ENCODE measurements at regions of chr13 and their contacts with region 1.

Region 1: GRCh38 chr13:24270639-24271141 is 38.7 kb upstream of the C1QTNF9 start:
- DNase-seq: no peak
- ATAC-seq: peak; percentile 55
- H3K4me3 Mint-ChIP-seq: peak overlapping the region; percentile 87
- H3K27ac Mint-ChIP-seq: peak overlapping the region; percentile 95
- H3K4me1 Mint-ChIP-seq: peaks cover 76% of the 10 kb centered on the region
- H3K27me3 Mint-ChIP-seq: no peaks in the 10 kb centered on the region
- CTCF ChIP-seq: no peak

Region 2: GRCh38 chr13:23810685-23811240 is 459.9 kb before region 1 on chr13:
- CTCF ChIA-PET with region 1: no interaction called
- POLR2A ChIA-PET with region 1: no interaction called
- intact Hi-C with region 1: loop called (anchors 5 kb)
- DNase-seq: no peak
- ATAC-seq: peak; percentile 68
- H3K4me3 Mint-ChIP-seq: peak overlapping the region; percentile 20
- H3K27ac Mint-ChIP-seq: no peak overlapping the region
- H3K4me1 Mint-ChIP-seq: peaks cover 53% of the 10 kb centered on the region
- H3K27me3 Mint-ChIP-seq: no peaks in the 10 kb centered on the region
- CTCF ChIP-seq: no peak

Region 3: DNA sequence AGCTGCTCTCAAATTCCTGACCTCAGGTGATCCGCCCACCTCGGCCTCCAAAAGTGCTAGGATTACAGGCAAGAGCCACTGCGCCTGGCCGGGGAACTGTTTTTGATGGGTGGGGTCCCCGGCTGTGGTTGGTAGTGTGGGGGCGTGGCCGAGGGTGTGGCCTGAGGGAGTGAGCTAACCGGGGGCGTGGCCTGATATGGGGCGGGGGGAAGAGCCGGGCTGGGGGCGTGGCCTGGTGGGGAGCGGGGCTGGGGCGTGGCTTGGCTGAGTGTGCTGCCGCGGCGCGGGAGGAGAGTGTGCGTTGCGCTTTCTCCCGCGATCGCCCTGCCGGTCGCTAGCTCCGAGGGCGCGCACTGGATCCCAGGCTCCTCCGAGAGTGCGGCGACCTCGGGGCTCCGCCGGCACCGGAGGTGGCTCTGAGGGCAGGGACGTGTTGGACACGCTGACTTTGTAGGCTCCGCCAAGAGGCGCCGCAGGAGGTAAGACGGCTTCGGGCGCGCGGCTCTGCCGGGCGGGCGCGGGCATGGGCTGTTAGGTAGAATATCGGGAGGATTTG is 110.2 kb before region 1 on chr13 and contains the start of gene SPATA13:
- CTCF ChIA-PET with region 1: no interaction called
- POLR2A ChIA-PET with region 1: no interaction called
- intact Hi-C with region 1: loop called (anchors 2 kb)
- DNase-seq: peak; percentile 86
- ATAC-seq: peak; percentile 98
- H3K4me3 Mint-ChIP-seq: peak within 1 kb of the TSS; percentile 83
- H3K27ac Mint-ChIP-seq: no peak within 1 kb of the TSS
- H3K4me1 Mint-ChIP-seq: peaks cover 18% of the 10 kb centered on the region
- H3K27me3 Mint-ChIP-seq: peaks cover 11% of the 10 kb centered on the region
- CTCF ChIP-seq: no peak
- total RNA-seq, gene SPATA13: 10.6 and 11.8 TPM in 2 replicates

Region 4: DNA sequence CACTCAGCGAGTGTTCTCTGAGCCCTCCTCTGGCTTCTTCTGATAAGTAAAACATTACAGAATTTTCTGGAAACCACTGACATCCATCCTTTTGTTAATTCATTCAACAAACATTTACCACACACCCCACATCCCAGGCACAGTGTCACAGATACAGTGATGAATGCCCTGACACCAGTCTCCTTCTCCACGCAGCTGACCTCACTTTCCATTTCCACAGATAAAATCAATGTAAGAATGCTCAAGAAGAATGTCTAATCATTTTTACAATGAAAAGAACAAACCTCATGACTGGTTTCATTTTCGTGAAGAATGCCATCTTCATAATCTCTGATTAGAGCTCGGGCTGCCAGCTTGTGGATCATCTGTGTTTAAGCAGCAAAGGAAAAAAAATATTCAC is 172.7 kb after region 1 on chr13:
- CTCF ChIA-PET with region 1: no interaction called
- POLR2A ChIA-PET with region 1: no interaction called
- intact Hi-C with region 1: loop called (anchors 10 kb)
- DNase-seq: no peak
- ATAC-seq: no peak
- H3K4me3 Mint-ChIP-seq: no peak overlapping the region
- H3K27ac Mint-ChIP-seq: no peak overlapping the region
- H3K4me1 Mint-ChIP-seq: no peaks in the 10 kb centered on the region
- H3K27me3 Mint-ChIP-seq: no peaks in the 10 kb centered on the region
- CTCF ChIP-seq: no peak

Region 5: DNA sequence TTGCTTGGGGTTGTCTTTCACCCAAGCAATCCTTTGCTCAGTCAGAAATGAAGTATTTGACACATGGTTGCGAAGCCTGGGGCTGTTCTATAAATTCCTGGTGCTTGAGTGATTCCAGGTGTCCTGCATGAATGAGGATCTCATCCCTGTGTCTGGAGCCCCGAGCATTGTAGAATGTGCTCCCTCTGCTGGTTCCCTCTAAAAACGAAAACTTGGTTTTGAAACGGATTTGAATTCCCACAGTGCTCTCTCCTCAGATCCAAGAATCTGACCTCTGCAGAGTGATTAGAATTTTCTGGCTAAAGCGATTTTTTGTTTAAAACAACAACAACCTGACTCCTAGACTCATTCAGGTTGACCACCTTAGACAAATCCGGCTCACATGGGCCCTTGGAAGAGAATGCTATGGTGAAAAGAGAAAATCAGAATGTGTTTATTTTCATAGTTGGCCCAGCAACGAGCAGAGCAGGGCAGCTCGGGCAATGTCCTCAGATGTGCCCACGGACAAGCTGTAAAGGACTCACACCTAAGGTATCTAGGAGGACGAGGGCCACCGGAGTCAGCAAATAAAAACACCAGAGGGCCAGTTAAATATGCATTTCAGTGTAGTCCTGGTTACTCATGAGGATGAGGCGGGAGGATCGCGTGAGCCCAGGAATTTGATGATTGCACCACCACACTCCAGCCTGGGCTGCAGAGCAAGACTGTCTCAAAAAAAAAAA is 400.9 kb after region 1 on chr13:
- CTCF ChIA-PET with region 1: no interaction called
- POLR2A ChIA-PET with region 1: no interaction called
- intact Hi-C with region 1: no loop called
- DNase-seq: no peak
- ATAC-seq: no peak
- H3K4me3 Mint-ChIP-seq: no peak overlapping the region
- H3K27ac Mint-ChIP-seq: no peak overlapping the region
- H3K4me1 Mint-ChIP-seq: peaks cover 8% of the 10 kb centered on the region
- H3K27me3 Mint-ChIP-seq: peaks cover 46% of the 10 kb centered on the region
- CTCF ChIP-seq: peak; percentile 37

Region 6: GRCh38 chr13:24922745-24923591 is 652.3 kb after region 1 on chr13:
- CTCF ChIA-PET with region 1: no interaction called
- POLR2A ChIA-PET with region 1: no interaction called
- intact Hi-C with region 1: loop called (anchors 2 kb)
- DNase-seq: peak; percentile 91
- ATAC-seq: peak; percentile 97
- H3K4me3 Mint-ChIP-seq: peak overlapping the region; percentile 91
- H3K27ac Mint-ChIP-seq: peak overlapping the region; percentile 97
- H3K4me1 Mint-ChIP-seq: peaks cover 16% of the 10 kb centered on the region
- H3K27me3 Mint-ChIP-seq: no peaks in the 10 kb centered on the region
- CTCF ChIP-seq: no peak